Psoas muscle (tissue), 8 donors: ENCODE measurements at regions of chr15 and their contacts with region 1.

Region 1: GRCh38 chr15:85707519-85708338 is 87.0 kb downstream of the KLHL25 start:
- DNase-seq: no peak
- ATAC-seq: peak in 3 of 4 donors; percentile 41 to 70 (median 64)
- H3K4me3 ChIP-seq: peak overlapping the region; percentile 51
- H3K27ac ChIP-seq: peak overlapping the region; percentile 85
- H3K4me1 ChIP-seq: peaks cover 52% of the 10 kb centered on the region
- H3K27me3 ChIP-seq: no peaks in the 10 kb centered on the region
- CTCF ChIP-seq: no peak

Region 2: DNA sequence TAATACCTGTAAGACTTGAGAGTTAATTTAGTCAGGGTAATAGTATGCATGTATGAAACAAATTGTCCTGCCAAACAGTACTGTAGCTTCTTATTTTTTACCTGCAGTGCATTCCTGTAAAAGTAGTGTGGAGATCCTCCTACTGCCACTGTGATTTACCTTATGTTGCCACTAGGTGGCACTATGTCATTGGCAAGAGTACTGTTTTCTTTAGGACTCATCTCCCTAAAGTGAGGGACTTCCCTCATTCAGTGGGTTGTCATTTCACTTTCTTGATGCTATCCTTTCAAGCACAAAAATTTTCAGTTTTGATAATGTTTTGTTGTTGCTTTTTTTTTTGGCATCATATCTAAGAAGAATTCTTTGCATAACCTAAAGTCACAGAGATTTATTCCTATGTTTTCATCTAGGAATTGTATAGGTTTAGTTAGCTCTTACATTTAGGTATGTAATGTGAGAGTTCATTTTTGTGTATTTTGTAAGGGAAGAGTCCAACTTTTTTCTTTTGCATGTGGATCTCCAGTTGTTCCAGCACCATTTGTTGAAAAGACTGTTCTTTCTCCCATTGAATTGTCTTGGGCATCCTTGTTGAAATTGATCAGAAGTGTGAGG is 221.7 kb before region 1 on chr15:
- intact Hi-C with region 1: loop called (anchors 10 kb)
- DNase-seq: no peak
- ATAC-seq: peak; percentile 80 to 91 (median 88)
- H3K4me3 ChIP-seq: no peak overlapping the region
- H3K27ac ChIP-seq: no peak overlapping the region
- H3K4me1 ChIP-seq: peaks cover 6% of the 10 kb centered on the region
- H3K27me3 ChIP-seq: no peaks in the 10 kb centered on the region
- CTCF ChIP-seq: peak; percentile 66

Region 3: GRCh38 chr15:85494048-85494793 is 213.5 kb before region 1 on chr15:
- intact Hi-C with region 1: loop called (anchors 10 kb)
- DNase-seq: no peak
- ATAC-seq: peak; percentile 64 to 78 (median 71)
- H3K4me3 ChIP-seq: no peak overlapping the region
- H3K27ac ChIP-seq: no peak overlapping the region
- H3K4me1 ChIP-seq: peaks cover 15% of the 10 kb centered on the region
- H3K27me3 ChIP-seq: no peaks in the 10 kb centered on the region
- CTCF ChIP-seq: no peak

Region 4: DNA sequence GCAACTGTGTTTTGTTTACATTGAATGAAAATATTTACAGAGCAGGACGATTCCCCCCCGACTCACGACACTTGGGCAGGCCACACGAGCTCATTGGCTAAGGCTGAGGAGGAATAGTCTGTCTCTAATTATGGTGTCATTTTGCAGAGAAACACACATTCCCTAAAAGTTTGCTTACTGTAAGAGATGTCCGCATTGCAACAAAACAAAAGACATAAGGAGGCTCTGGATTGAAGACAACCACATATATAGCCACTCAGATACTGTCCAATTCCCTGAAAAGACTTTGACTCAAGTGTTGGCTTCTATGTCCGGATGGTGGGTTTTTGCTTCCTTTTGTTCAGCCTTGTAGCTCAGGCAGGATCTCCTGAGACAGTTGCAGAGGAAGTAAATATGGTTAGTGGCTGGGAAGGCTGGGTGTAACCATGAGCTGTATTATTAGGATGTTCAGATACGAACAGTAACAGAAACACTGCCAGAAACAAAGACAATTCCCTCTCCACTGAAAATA is 83.4 kb before region 1 on chr15:
- intact Hi-C with region 1: loop called in 1 of 2 experiments (anchors 5 kb)
- DNase-seq: no peak
- ATAC-seq: peak in 2 of 4 donors; percentile 8
- H3K4me3 ChIP-seq: peak overlapping the region; percentile 24
- H3K27ac ChIP-seq: peak overlapping the region; percentile 87
- H3K4me1 ChIP-seq: peaks cover 72% of the 10 kb centered on the region
- H3K27me3 ChIP-seq: no peaks in the 10 kb centered on the region
- CTCF ChIP-seq: no peak